Caco-2 (cell line): ENCODE measurements at regions of chr17 and their contacts with region 1.

Region 1: GRCh38 chr17:2347547-2348307 is 10.4 kb downstream of the SGSM2 start:
- DNase-seq: peak; percentile 96 to 97
- H3K4me3 ChIP-seq: no peak overlapping the region
- H3K4me3 Mint-ChIP-seq: peak overlapping the region; percentile 59
- H3K27ac Mint-ChIP-seq: peak overlapping the region; percentile 90
- H3K4me1 ChIP-seq: peaks cover 29% of the 10 kb centered on the region
- H3K4me1 Mint-ChIP-seq: peaks cover 21% of the 10 kb centered on the region
- H3K27me3 ChIP-seq: no peaks in the 10 kb centered on the region
- H3K27me3 Mint-ChIP-seq: no peaks in the 10 kb centered on the region
- CTCF ChIP-seq: no peak

Region 2: GRCh38 chr17:2054512-2055291 is 293.0 kb before region 1 on chr17 and contains the start of gene HIC1:
- CTCF ChIA-PET with region 1: interaction called, 3 read pairs
- POLR2A ChIA-PET with region 1: no interaction called
- intact Hi-C with region 1: loop called (anchors 5 kb)
- DNase-seq: peak; percentile 73 to 88
- H3K4me3 ChIP-seq: peak within 1 kb of the TSS; percentile 73
- H3K4me3 Mint-ChIP-seq: peak within 1 kb of the TSS; percentile 76
- H3K27ac Mint-ChIP-seq: no peak within 1 kb of the TSS
- H3K4me1 ChIP-seq: peaks cover 5% of the 10 kb centered on the region
- H3K4me1 Mint-ChIP-seq: no peaks in the 10 kb centered on the region
- H3K27me3 ChIP-seq: no peaks in the 10 kb centered on the region
- H3K27me3 Mint-ChIP-seq: peaks cover 12% of the 10 kb centered on the region
- CTCF ChIP-seq: peak; percentile 63 to 96
- total RNA-seq, gene HIC1: 0.59 and 1.8 TPM in 2 replicates

Region 3: GRCh38 chr17:2303204-2304188 is 44.2 kb before region 1 on chr17 and contains the starts of genes SMG6 and SRR:
- CTCF ChIA-PET with region 1: interaction called, 15 read pairs
- POLR2A ChIA-PET with region 1: interaction called, 9 read pairs
- intact Hi-C with region 1: no loop called
- DNase-seq: peak; percentile 90 to 92
- H3K4me3 ChIP-seq: peak within 1 kb of the TSS; percentile 73
- H3K4me3 Mint-ChIP-seq: peak within 1 kb of the TSS; percentile 80
- H3K27ac Mint-ChIP-seq: peak within 1 kb of the TSS; percentile 72
- H3K4me1 ChIP-seq: no peaks in the 10 kb centered on the region
- H3K4me1 Mint-ChIP-seq: peaks cover 13% of the 10 kb centered on the region
- H3K27me3 ChIP-seq: no peaks in the 10 kb centered on the region
- H3K27me3 Mint-ChIP-seq: no peaks in the 10 kb centered on the region
- CTCF ChIP-seq: no peak
- total RNA-seq, gene SMG6: 33.8 and 35.3 TPM in 2 replicates
- total RNA-seq, gene SRR: 15.2 and 18.2 TPM in 2 replicates

Region 4: DNA sequence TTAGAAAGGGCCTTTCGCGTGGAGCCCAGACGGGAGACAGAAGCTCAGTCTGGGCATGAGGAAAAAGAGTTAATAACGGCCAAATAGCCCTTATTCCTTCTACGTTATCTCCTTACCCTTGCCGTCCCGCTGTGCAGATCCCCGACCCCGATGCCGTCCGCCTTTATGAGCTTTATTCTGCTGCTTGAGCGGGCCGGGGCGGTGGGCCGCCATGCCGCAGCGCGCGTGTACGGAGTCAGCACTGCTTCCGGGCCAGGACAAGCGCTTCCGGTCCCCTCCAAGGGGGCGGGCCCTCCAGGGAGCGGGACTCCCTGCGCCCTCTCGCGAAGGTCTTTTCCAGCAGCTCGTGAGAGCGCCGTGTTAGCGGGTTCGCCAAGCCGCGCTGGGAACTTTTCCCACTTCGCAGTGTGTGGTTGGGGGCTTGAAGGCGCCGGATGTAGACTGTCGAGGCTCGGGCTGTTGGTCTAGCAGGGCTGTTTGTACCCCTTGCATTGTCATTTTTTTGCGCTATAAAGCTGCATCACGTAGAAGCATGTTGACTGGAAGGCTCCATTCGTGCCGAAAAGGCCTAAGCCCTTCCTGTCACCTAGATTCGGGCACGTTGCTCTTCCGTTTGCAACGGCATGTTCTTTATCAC is 11.4 kb before region 1 on chr17 and contains the start of gene TSR1:
- CTCF ChIA-PET with region 1: interaction called, 60 read pairs
- POLR2A ChIA-PET with region 1: interaction called, 29 read pairs
- intact Hi-C with region 1: loop called (anchors 1 kb)
- DNase-seq: peak; percentile 93 to 95
- H3K4me3 ChIP-seq: peak within 1 kb of the TSS; percentile 72
- H3K4me3 Mint-ChIP-seq: peak within 1 kb of the TSS; percentile 99
- H3K27ac Mint-ChIP-seq: peak within 1 kb of the TSS; percentile 95
- H3K4me1 ChIP-seq: peaks cover 13% of the 10 kb centered on the region; the same call in 1 of the 2 replicates
- H3K4me1 Mint-ChIP-seq: peaks cover 6% of the 10 kb centered on the region
- H3K27me3 ChIP-seq: no peaks in the 10 kb centered on the region
- H3K27me3 Mint-ChIP-seq: no peaks in the 10 kb centered on the region
- CTCF ChIP-seq: peak in 1 of 2 experiments; percentile 46
- total RNA-seq, gene TSR1: 65.4 and 67.3 TPM in 2 replicates

Region 5: GRCh38 chr17:2369551-2370210 is 22.0 kb after region 1 on chr17:
- CTCF ChIA-PET with region 1: interaction called, 11 read pairs
- POLR2A ChIA-PET with region 1: no interaction called
- intact Hi-C with region 1: no loop called
- DNase-seq: peak in 1 of 2 experiments; percentile 40
- H3K4me3 ChIP-seq: no peak overlapping the region
- H3K4me3 Mint-ChIP-seq: no peak overlapping the region
- H3K27ac Mint-ChIP-seq: no peak overlapping the region
- H3K4me1 ChIP-seq: no peaks in the 10 kb centered on the region
- H3K4me1 Mint-ChIP-seq: no peaks in the 10 kb centered on the region
- H3K27me3 ChIP-seq: no peaks in the 10 kb centered on the region
- H3K27me3 Mint-ChIP-seq: no peaks in the 10 kb centered on the region
- CTCF ChIP-seq: no peak

Region 6: DNA sequence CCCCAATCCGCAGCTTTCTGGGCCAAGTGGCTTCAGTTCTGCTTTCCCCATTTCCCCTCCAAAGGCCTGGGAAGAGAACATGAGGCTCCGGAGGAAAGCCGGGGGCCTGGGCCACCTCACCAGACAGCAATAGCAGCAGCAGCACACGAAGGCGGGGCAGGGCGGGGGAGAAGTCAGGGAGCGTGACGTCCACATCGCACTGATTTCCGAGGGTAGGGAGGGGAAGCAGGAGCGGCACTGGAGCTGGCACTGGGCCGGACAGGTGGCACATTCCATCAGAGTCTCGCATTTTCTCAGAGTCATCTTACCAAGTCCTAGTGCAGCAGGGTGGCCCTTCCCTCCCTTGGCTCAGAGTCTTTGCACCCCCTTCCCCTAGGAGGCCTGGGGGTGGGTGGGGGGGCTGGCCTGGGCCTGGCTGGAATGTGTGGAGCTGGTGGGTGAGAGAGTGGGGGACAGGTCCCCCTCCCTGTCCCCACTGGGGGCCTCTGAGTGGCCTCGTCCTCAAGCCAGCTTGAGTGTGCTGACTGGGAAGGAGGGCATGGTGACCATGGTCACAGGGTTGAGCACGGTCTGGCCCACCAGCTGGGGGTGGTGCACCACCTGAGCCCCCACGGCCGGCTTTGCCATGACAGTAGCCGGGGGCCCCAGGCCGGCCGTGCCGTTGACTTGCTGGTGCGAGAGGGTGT is 38.8 kb after region 1 on chr17:
- CTCF ChIA-PET with region 1: interaction called, 10 read pairs
- POLR2A ChIA-PET with region 1: no interaction called
- intact Hi-C with region 1: no loop called
- DNase-seq: no peak
- H3K4me3 ChIP-seq: no peak overlapping the region
- H3K4me3 Mint-ChIP-seq: no peak overlapping the region
- H3K27ac Mint-ChIP-seq: no peak overlapping the region
- H3K4me1 ChIP-seq: no peaks in the 10 kb centered on the region
- H3K4me1 Mint-ChIP-seq: no peaks in the 10 kb centered on the region
- H3K27me3 ChIP-seq: no peaks in the 10 kb centered on the region
- H3K27me3 Mint-ChIP-seq: no peaks in the 10 kb centered on the region
- CTCF ChIP-seq: no peak

Region 7: GRCh38 chr17:2392252-2393173 is 44.8 kb after region 1 on chr17:
- CTCF ChIA-PET with region 1: interaction called, 14 read pairs
- POLR2A ChIA-PET with region 1: no interaction called
- intact Hi-C with region 1: no loop called
- DNase-seq: peak; percentile 96 to 99
- H3K4me3 ChIP-seq: peak overlapping the region; percentile 96
- H3K4me3 Mint-ChIP-seq: peak overlapping the region; percentile 84
- H3K27ac Mint-ChIP-seq: peak overlapping the region; percentile 85
- H3K4me1 ChIP-seq: peaks cover 29% of the 10 kb centered on the region
- H3K4me1 Mint-ChIP-seq: peaks cover 17% of the 10 kb centered on the region
- H3K27me3 ChIP-seq: no peaks in the 10 kb centered on the region
- H3K27me3 Mint-ChIP-seq: no peaks in the 10 kb centered on the region
- CTCF ChIP-seq: no peak